Dorsolateral prefrontal cortex (tissue), 120 donors: ENCODE measurements at regions of chr5 and their contacts with region 1.

Region 1: GRCh38 chr5:83564069-83564749 is 92.7 kb downstream of the VCAN start:
- DNase-seq: no peak
- H3K4me3 ChIP-seq: peak overlapping the region in 16 of 59 donors; percentile 1 to 50 (median 31)
- H3K27ac ChIP-seq: peak overlapping the region in 47 of 59 donors; percentile 27 to 90 (median 80)
- H3K27me3 ChIP-seq: no peaks in the 10 kb centered on the region
- CTCF ChIP-seq: peak; percentile 63 to 92 (median 82)

Region 2: DNA sequence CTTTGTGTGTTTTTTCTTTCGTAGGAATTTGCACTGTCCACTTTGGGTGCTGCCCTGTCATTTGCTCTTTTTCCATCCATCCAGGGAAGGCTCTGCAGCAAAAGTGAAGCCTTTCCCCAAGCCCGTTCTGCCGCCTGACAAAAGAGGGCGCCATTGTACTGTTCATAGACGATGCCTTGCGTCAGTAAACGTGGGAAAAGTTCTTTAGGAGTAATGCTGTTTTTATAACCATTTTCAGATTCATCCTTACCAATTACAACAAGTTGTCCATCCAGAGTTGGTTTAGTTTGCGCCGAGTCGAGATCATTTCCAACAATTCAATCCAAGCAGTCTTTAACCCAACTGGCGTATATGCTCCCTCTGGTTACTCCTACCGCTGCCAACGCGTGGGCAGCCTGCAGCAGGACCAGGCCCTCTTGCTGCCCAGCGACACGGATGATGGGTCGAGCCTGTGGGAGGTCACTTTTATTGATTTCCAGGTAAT is 1251.8 kb before region 1 on chr5:
- intact Hi-C with region 1: loop called in 1 of 2 experiments (anchors 5 kb)
- DNase-seq: peak; percentile 19 to 76 (median 68)
- H3K4me3 ChIP-seq: no peak overlapping the region
- H3K27ac ChIP-seq: no peak overlapping the region
- H3K27me3 ChIP-seq: no peaks in the 10 kb centered on the region
- CTCF ChIP-seq: peak; percentile 42 to 93 (median 80)

Region 3: DNA sequence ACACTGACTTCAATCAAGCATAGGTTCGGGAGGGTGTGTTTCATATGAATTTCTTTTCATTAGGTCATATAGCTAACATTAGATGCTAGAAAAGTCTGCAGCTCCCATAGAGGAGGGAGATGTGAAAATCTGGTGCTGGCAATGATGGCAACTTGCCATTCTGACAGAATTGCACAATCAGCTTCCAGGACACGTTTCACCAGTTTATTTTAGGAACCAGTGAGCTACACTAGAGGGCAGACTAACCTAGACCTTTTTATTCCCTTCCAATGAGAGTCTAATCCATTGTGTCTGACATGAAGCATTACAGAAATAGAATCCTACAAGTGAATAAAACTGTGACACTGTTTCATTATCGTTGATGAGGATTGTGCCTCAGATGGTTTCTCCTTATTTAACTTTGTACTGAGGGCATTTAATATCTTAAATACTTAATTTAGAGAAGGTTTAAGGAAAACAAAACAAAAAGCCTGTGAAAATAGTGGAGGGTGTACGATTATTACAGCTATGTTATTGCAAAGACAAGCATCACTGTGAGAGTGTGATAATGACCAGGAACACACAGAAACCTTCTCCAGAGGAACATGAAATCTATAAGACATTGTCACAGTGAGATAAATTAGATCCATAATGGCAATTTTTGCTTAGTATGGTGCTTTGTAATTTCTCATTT is 922.7 kb before region 1 on chr5:
- intact Hi-C with region 1: loop called (anchors 5 to 10 kb)
- DNase-seq: peak in 7 of 10 donors; percentile 22 to 73 (median 47)
- H3K4me3 ChIP-seq: peak overlapping the region in 16 of 59 donors; percentile 2 to 38 (median 22)
- H3K27ac ChIP-seq: peak overlapping the region in 43 of 59 donors; percentile 16 to 77 (median 58)
- H3K27me3 ChIP-seq: no peaks in the 10 kb centered on the region
- CTCF ChIP-seq: peak; percentile 60 to 93 (median 77)

Region 4: GRCh38 chr5:82885627-82886389 is 678.4 kb before region 1 on chr5:
- intact Hi-C with region 1: loop called in 1 of 2 experiments (anchors 10 kb)
- DNase-seq: peak in 2 of 10 donors; percentile 23 to 55
- H3K4me3 ChIP-seq: peak overlapping the region in 3 of 59 donors; percentile 21 to 35 (median 29)
- H3K27ac ChIP-seq: no peak overlapping the region
- H3K27me3 ChIP-seq: no peaks in the 10 kb centered on the region
- CTCF ChIP-seq: peak in 49 of 56 donors; percentile 16 to 74 (median 45)

Region 5: DNA sequence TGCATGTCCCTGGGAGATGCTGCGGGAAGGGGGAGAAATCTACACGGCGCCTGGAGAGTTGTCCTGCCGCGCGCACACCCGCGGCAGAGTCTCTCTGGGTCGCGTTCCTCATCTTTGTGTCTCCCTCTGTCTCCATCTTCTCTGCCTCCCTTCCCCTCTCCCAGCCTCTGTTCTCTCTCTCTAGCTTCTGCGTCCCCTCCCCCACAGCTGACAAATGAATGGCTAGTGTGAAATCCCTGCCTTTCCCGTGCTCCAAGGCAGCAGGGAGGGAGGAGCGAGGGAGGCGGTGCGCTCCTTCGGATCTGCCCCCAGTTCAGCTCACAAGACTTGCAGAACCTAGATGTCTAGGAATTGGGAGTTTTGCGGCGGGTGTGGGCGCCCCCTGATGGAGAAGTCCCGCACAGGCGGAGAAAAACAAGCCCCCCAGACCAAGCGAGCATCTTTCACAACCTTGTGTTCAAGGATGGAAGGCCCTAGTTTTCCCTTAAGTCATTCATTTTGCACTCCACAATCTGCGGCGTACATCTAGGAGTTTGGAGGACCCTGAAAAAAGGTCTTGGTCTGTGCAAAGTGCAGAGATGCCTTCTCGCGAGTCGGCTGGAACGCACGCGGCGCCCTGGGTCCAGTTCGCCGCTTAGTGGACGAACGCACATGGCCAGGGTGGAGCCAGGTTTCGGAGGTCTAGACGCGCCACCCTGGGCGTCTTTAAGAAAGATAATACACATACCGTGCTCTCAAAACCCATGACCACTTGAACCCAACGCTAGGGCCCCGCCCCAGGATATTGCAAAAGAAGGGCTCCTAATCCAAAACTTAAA is 90.7 kb before region 1 on chr5:
- intact Hi-C with region 1: loop called in 1 of 2 experiments (anchors 5 kb)
- DNase-seq: peak; percentile 38 to 86 (median 80)
- H3K4me3 ChIP-seq: peak overlapping the region; percentile 37 to 75 (median 59)
- H3K27ac ChIP-seq: peak overlapping the region in 28 of 59 donors; percentile 8 to 75 (median 50)
- H3K27me3 ChIP-seq: peaks cover 0 to 89% (median 41%) of the 10 kb centered on the region in 45 donors
- CTCF ChIP-seq: peak; percentile 53 to 91 (median 82)

Region 6: GRCh38 chr5:83487155-83487554 is 77.1 kb before region 1 on chr5:
- intact Hi-C with region 1: no loop called
- DNase-seq: no peak
- H3K4me3 ChIP-seq: no peak overlapping the region
- H3K27ac ChIP-seq: no peak overlapping the region
- H3K27me3 ChIP-seq: no peaks in the 10 kb centered on the region
- CTCF ChIP-seq: no peak

Region 7: GRCh38 chr5:83548581-83548980 is 15.6 kb before region 1 on chr5:
- intact Hi-C with region 1: no loop called
- DNase-seq: no peak
- H3K4me3 ChIP-seq: no peak overlapping the region
- H3K27ac ChIP-seq: no peak overlapping the region
- H3K27me3 ChIP-seq: no peaks in the 10 kb centered on the region
- CTCF ChIP-seq: no peak